OCI-LY7 (cell line): ENCODE measurements at regions of chr11 and their contacts with region 1.

Region 1: GRCh38 chr11:65013692-65014145 is 241 bp upstream of the ARL2 start:
- DNase-seq: peak; percentile 98
- H3K4me3 ChIP-seq: peak overlapping the region; percentile 83
- H3K27ac ChIP-seq: peak overlapping the region; percentile 92
- H3K4me1 ChIP-seq: peaks cover 26% of the 10 kb centered on the region
- CTCF ChIP-seq: peak; percentile 71

Region 2: DNA sequence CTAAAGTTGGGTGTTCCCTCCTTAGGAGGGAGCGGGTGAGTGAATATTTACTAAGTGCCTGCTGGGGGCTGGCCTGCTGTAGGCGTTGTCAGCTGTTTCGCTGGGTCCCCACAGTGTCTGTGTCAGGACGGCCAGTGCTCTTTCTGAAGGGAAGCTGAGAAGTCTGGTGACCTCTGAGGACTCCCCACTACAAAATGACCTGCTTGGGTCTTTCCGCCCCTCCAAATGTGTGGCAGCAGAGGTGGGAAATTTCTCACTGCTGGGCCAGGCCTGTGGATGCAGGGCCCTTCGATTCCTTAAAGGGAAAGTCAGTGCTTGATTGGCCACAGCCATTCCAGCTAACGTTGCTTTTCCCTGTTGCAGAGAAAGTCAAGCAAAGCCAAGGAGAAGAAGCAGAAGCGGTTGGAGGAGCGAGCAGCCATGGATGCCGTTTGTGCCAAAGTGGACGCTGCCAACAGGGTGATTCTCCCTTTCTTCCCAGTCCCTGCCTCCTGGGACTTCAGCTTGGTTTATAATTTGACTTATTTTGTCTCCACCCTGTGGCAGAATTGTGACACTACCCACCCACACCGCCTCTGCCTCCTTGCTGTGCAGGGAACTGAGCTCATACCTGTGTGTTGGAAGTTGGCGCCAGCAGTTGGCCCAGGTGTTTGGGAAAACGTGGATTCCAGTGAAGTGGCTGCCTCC is 1068.1 kb before region 1 on chr11:
- CTCF ChIA-PET with region 1: no interaction called
- POLR2A ChIA-PET with region 1: no interaction called
- intact Hi-C with region 1: no loop called
- DNase-seq: peak; percentile 62
- H3K4me3 ChIP-seq: no peak overlapping the region
- H3K27ac ChIP-seq: no peak overlapping the region
- H3K4me1 ChIP-seq: peaks cover 6% of the 10 kb centered on the region
- CTCF ChIP-seq: peak; percentile 83

Region 3: GRCh38 chr11:64924102-64924851 is 89.4 kb before region 1 on chr11 and contains the start of gene PPP2R5B:
- CTCF ChIA-PET with region 1: no interaction called
- POLR2A ChIA-PET with region 1: interaction called, 3 read pairs
- intact Hi-C with region 1: loop called (anchors 2 kb)
- DNase-seq: peak; percentile 90
- H3K4me3 ChIP-seq: peak within 1 kb of the TSS; percentile 78
- H3K27ac ChIP-seq: peak within 1 kb of the TSS; percentile 50
- H3K4me1 ChIP-seq: peaks cover 23% of the 10 kb centered on the region
- CTCF ChIP-seq: no peak
- total RNA-seq, gene PPP2R5B: 8.6 and 8.8 TPM in 2 replicates

Region 4: GRCh38 chr11:65003282-65003681 is 10.4 kb before region 1 on chr11:
- CTCF ChIA-PET with region 1: interaction called, 4 read pairs
- POLR2A ChIA-PET with region 1: interaction called, 13 read pairs
- intact Hi-C with region 1: no loop called
- DNase-seq: no peak
- H3K4me3 ChIP-seq: no peak overlapping the region
- H3K27ac ChIP-seq: no peak overlapping the region
- H3K4me1 ChIP-seq: peaks cover 10% of the 10 kb centered on the region
- CTCF ChIP-seq: no peak

Region 5: GRCh38 chr11:65040847-65041621 is 27.3 kb after region 1 on chr11 and contains the start of gene SAC3D1:
- CTCF ChIA-PET with region 1: interaction called, 3 read pairs
- POLR2A ChIA-PET with region 1: no interaction called
- intact Hi-C with region 1: loop called (anchors 1 kb)
- DNase-seq: peak; percentile 94
- H3K4me3 ChIP-seq: peak within 1 kb of the TSS; percentile 76
- H3K27ac ChIP-seq: peak within 1 kb of the TSS; percentile 84
- H3K4me1 ChIP-seq: peaks cover 36% of the 10 kb centered on the region
- CTCF ChIP-seq: no peak
- total RNA-seq, gene SAC3D1: 23.3 and 28.2 TPM in 2 replicates

Region 6: GRCh38 chr11:65111744-65112414 is 98.2 kb after region 1 on chr11 and contains the start of gene TM7SF2:
- CTCF ChIA-PET with region 1: interaction called, 3 read pairs
- POLR2A ChIA-PET with region 1: no interaction called
- intact Hi-C with region 1: loop called (anchors 1 kb)
- DNase-seq: peak; percentile 97
- H3K4me3 ChIP-seq: peak within 1 kb of the TSS; percentile 69
- H3K27ac ChIP-seq: peak within 1 kb of the TSS; percentile 73
- H3K4me1 ChIP-seq: peaks cover 55% of the 10 kb centered on the region
- CTCF ChIP-seq: no peak
- total RNA-seq, gene TM7SF2: 25.8 and 30.1 TPM in 2 replicates

Region 7: DNA sequence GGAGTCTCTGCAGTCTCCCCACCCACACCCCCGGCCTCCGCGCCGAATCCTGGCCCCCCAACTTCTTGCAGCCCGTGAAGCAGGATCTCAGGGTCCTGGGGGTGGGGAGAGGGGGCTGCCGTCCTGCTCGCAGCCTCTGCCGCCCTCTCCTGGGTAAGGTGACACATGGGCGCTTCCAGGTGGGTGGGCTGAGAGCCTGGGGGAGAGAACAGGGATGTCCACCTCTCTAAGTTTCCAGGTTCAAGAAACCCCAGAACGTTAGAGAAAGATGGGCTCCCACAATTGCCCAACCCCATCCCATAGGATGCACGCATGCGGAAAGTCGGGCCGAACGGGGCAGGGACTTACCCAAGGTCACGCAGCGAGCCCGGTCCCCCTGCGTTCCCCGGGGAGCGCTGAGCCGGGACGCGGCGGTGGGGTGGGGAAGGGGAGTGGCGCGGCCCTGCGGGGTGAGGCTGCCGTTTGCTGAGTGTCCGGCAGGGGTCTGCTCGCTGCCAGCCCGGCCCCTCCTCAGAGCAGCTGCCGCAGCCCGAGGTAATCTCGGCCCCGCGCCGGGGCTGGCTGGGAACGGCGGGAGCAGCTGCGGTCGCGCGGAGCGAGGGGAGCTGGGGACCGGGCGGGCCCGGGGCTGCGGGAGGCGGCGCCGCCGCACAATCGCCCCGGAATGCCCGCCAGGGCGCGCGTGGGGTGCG is 167.3 kb after region 1 on chr11:
- CTCF ChIA-PET with region 1: no interaction called
- POLR2A ChIA-PET with region 1: no interaction called
- intact Hi-C with region 1: loop called (anchors 5 kb)
- DNase-seq: peak; percentile 83
- H3K4me3 ChIP-seq: peak overlapping the region; percentile 91
- H3K27ac ChIP-seq: peak overlapping the region; percentile 64
- H3K4me1 ChIP-seq: peaks cover 26% of the 10 kb centered on the region
- CTCF ChIP-seq: peak; percentile 89